Sciatic nerve (tissue), 2 donors: ENCODE measurements at regions of chr11 and their contacts with region 1.

Region 1: GRCh38 chr11:5065027-5065426 is 4.3 kb upstream of the OR52E1 start:
- DNase-seq: no peak
- ATAC-seq: no peak

Region 2: DNA sequence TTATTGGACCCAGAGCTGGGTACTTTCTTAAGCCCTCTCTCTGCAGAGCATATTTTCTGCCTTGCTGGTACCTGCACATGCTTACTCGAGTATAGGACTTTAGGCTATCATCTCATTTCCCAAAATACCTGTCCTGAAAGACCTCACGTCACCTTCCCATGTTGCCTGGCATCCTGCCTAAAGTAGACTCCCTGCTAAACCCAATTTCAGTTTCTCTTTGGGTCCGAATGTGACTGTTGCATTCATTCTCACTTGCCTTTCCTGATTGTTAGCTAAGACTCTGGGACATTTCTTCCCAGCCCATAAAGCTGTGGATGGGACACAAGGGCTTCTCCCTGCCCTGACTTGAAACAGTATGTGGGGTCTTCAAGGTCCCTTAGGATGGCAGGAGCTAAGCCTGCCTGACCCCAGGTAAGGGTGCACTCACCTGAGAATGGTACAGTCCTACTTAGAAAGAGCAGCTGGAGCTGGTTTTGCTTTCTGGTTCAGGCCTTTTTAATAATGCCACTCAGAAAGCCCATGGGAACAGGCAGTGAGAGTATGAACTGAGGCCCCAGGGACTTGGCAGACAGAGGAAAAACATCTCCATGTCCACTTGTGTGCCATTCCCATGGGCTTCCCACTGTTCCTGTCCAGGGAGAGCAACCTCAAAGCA is 380.3 kb before region 1 on chr11:
- intact Hi-C with region 1: no loop called
- DNase-seq: no peak
- ATAC-seq: no peak

Region 3: GRCh38 chr11:5043380-5043779 is 21.6 kb before region 1 on chr11:
- intact Hi-C with region 1: no loop called
- DNase-seq: no peak
- ATAC-seq: no peak

Region 4: GRCh38 chr11:6345366-6345765 is 1280.3 kb after region 1 on chr11:
- intact Hi-C with region 1: loop called (anchors 5 kb)
- DNase-seq: no peak
- ATAC-seq: no peak

Region 5: GRCh38 chr11:6799402-6799801 is 1734.4 kb after region 1 on chr11 and contains the start of gene OR6A2:
- intact Hi-C with region 1: no loop called
- DNase-seq: no peak
- ATAC-seq: no peak
- total RNA-seq, gene OR6A2: 0.18 TPM